Activated naive CD4-positive, alpha-beta T cell treated with anti-CD3 and anti-CD28 coated beads for 36 hours (primary cell): ENCODE measurements at regions of chr5 and their contacts with region 1.

Region 1: DNA sequence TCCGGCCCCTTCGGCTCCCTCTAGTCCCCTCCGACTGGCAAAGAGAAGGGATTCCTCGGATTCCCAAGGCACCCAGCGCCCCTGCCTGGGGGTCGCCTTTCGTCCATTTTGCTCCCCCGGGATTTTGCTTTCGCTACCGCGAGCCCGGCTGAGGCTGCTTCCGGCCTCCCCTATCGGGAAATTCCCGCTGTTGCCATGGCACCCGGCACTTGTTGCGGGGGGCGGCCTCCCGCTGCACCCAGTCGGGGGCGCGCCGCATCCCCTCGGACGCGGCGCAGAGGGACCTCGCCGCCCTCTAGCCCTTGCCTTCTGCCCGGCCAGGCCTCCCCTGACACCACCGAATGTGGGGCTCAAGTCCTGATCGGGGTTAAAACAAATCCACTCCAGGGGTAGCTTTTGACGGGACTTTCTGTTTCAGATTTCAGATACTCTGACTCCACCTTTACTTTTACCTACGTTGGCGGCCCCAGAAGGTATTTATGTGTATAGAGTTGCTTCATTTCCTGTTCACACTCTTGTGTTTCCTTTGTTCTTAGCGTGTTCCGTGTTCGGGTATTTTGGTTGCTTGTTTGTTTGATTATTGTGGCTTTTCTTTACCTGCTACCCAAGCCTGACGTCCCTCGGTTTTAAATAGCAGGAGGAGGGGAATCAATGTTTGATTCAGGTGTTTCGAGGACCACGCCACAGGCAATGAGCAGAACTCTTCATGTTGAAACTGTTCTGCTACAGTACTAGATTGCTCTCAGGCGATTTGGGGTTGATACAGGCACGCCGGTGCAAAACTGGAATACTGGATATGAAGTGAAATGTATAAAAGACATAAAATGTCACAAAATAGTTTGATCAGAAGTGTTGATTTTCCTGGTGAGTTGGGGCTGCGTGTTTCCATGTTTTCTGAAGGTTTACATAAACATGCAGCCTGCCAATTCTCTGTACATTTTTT is 1.5 kb downstream of the PARP8 start:
- DNase-seq: peak; percentile 88
- H3K4me3 Mint-ChIP-seq: peak overlapping the region; percentile 89
- H3K27ac Mint-ChIP-seq: peak overlapping the region; percentile 99
- H3K4me1 Mint-ChIP-seq: peaks cover 36% of the 10 kb centered on the region
- H3K27me3 Mint-ChIP-seq: no peaks in the 10 kb centered on the region

Region 2: GRCh38 chr5:50440651-50441492 is 227.1 kb before region 1 on chr5 and contains the start of gene EMB:
- CTCF ChIA-PET with region 1: interaction called, 3 read pairs
- intact Hi-C with region 1: loop called (anchors 1 kb)
- DNase-seq: peak; percentile 84
- H3K4me3 Mint-ChIP-seq: peak within 1 kb of the TSS; percentile 89
- H3K27ac Mint-ChIP-seq: peak within 1 kb of the TSS; percentile 96
- H3K4me1 Mint-ChIP-seq: peaks cover 56% of the 10 kb centered on the region
- H3K27me3 Mint-ChIP-seq: no peaks in the 10 kb centered on the region
- total RNA-seq, gene EMB: 41.4 to 43.7 TPM

Region 3: GRCh38 chr5:50595199-50595598 is 72.7 kb before region 1 on chr5:
- CTCF ChIA-PET with region 1: no interaction called
- intact Hi-C with region 1: loop called (anchors 2 kb)
- DNase-seq: no peak
- H3K4me3 Mint-ChIP-seq: no peak overlapping the region
- H3K27ac Mint-ChIP-seq: peak overlapping the region; percentile 8
- H3K4me1 Mint-ChIP-seq: peaks cover 40% of the 10 kb centered on the region
- H3K27me3 Mint-ChIP-seq: no peaks in the 10 kb centered on the region

Region 4: DNA sequence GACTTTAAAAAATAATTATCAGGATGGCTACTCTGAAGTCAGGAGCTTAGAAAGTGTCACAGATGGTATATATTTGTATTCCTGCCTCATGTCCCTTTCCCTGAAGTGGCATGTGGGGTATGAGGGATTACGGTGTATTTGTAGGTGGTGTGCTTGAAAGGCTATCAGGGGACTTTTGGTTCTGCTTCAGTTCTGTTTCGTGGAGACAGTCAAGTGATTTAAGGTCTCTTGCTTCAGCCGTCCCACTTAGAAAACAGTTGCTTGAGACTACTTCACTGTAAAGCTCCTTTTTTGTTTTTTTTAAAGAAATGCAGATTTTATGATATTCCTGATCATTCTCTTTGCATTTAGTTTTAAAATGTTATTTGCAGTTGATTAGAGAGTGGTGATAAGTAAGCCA is 16.8 kb after region 1 on chr5:
- CTCF ChIA-PET with region 1: no interaction called
- intact Hi-C with region 1: loop called (anchors 1 kb)
- DNase-seq: no peak
- H3K4me3 Mint-ChIP-seq: no peak overlapping the region
- H3K27ac Mint-ChIP-seq: no peak overlapping the region
- H3K4me1 Mint-ChIP-seq: peaks cover 49% of the 10 kb centered on the region
- H3K27me3 Mint-ChIP-seq: no peaks in the 10 kb centered on the region

Region 5: GRCh38 chr5:50711273-50711672 is 43.3 kb after region 1 on chr5:
- CTCF ChIA-PET with region 1: interaction called, 3 read pairs
- intact Hi-C with region 1: loop called (anchors 1 kb)
- DNase-seq: peak; percentile 76
- H3K4me3 Mint-ChIP-seq: peak overlapping the region; percentile 71
- H3K27ac Mint-ChIP-seq: peak overlapping the region; percentile 88
- H3K4me1 Mint-ChIP-seq: peaks cover 79% of the 10 kb centered on the region
- H3K27me3 Mint-ChIP-seq: no peaks in the 10 kb centered on the region

Region 6: DNA sequence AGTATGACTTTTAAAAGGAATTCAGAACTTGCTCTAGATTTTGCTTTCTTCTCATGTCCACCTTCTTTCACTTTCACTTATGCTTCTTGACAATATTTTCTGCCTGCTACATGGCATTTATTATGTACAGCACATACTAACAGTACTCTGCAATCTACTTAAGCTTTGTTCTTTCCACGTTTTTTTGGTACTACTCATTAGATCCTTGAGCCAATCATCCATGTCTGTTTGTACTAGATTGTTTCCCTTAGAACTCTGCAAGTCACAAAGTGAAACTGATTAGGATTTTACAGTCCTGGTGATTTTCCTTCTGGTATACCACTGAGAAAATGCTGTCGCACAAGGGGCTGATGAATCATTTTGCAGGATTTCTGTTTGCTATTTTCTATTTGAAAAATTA is 76.9 kb after region 1 on chr5:
- CTCF ChIA-PET with region 1: no interaction called
- intact Hi-C with region 1: loop called (anchors 1 kb)
- DNase-seq: no peak
- H3K4me3 Mint-ChIP-seq: peak overlapping the region; percentile 70
- H3K27ac Mint-ChIP-seq: peak overlapping the region; percentile 69
- H3K4me1 Mint-ChIP-seq: peaks cover 57% of the 10 kb centered on the region
- H3K27me3 Mint-ChIP-seq: no peaks in the 10 kb centered on the region

Region 7: GRCh38 chr5:50751064-50751657 is 83.2 kb after region 1 on chr5:
- CTCF ChIA-PET with region 1: no interaction called
- intact Hi-C with region 1: loop called (anchors 1 kb)
- DNase-seq: peak; percentile 52
- H3K4me3 Mint-ChIP-seq: no peak overlapping the region
- H3K27ac Mint-ChIP-seq: peak overlapping the region; percentile 47
- H3K4me1 Mint-ChIP-seq: peaks cover 37% of the 10 kb centered on the region
- H3K27me3 Mint-ChIP-seq: no peaks in the 10 kb centered on the region

Region 8: DNA sequence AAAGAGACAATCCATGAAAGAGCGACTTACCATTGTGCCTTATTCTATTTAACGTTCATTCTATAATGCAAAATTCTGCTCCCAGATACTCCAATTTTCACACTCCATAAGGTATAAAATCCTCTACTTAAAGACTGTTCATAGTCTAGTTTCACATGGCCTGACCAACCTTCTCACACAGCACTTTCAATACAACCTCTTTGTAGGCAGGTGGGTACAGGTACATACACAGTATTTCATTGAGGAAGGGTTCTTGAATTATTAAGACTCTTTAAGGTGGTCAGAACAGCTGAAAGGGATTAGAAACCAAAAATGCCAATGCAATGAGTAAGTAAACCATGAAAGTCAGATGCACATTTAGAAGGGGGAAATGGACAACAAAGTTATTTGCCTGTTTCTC is 350.5 kb after region 1 on chr5:
- CTCF ChIA-PET with region 1: no interaction called
- intact Hi-C with region 1: no loop called
- DNase-seq: no peak
- H3K4me3 Mint-ChIP-seq: no peak overlapping the region
- H3K27ac Mint-ChIP-seq: no peak overlapping the region
- H3K4me1 Mint-ChIP-seq: no peaks in the 10 kb centered on the region
- H3K27me3 Mint-ChIP-seq: no peaks in the 10 kb centered on the region